ENCODE measurements at regions of chr2 and their contacts with region 1.

Region 1: DNA sequence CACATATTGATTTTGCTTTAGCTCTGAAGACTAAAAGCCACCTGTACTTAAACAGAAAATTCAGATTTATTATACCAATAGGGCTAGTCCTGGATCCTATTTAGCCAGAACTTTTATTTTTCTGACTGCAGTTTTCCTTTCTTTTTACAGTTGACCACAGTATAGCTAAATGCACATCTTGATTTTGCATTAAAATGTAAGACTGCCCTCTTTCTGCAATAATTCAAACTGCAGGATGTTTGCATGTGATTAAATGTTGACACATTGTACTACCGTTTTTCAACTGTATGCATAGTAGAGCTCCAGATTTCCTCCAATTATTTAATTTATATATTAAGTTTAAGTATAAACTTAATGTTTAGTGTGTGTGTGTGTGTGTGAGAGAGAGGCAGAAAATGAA is 1262.9 kb downstream of the SUCLG1 start:
- DNase-seq: peak; percentile 62
- H3K4me3 ChIP-seq: no peak overlapping the region
- H3K27ac ChIP-seq: peak overlapping the region; percentile 34
- H3K4me1 ChIP-seq: peaks cover 7% of the 10 kb centered on the region
- H3K27me3 ChIP-seq: no peaks in the 10 kb centered on the region
- CTCF ChIP-seq: peak; percentile 42 to 51
- POLR2A ChIP-seq: no peak

Region 2: DNA sequence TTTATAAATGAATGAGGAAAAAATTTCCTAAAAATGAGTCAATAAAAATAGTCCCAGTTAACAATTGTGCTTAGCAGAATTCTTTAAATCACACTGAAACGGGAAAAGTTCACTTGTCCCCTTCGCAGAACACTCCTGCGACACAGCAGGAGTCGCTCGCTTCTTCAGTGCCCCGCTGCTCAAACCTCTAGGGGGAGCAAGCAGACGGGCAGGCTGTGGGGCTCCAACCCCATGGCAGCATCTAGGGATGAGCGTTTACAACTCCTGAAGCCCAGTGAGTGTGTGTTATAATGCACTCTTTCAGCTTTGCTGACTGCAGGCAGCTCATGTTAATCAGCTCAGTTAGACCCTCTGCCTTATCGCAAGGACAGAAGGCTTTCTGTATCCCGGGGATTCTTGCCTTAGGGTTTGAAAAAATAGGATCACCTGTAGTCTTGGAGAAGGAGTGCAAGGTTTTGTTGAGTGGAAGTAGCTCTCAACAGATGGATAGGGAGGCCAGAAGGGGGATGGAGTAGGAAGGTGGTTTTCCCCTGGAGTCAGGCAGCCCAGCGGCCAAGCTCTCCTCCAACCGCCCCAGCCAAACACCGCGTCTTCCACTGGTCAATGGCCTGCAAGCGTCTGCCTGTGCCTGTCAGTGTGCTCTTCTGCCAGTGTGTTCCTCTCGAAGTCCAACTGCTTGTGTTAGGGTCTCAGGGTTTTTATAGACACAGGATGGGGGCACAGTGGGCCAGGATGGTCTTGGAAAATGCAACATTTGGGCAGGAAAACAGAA is 913.9 kb before region 1 on chr2:
- CTCF ChIA-PET with region 1: no interaction called
- POLR2A ChIA-PET with region 1: no interaction called
- dilution Hi-C with region 1: no loop called
- intact Hi-C with region 1: no loop called
- DNase-seq: no peak
- H3K4me3 ChIP-seq: no peak overlapping the region
- H3K27ac ChIP-seq: no peak overlapping the region
- H3K4me1 ChIP-seq: no peaks in the 10 kb centered on the region
- H3K27me3 ChIP-seq: no peaks in the 10 kb centered on the region
- CTCF ChIP-seq: no peak
- POLR2A ChIP-seq: no peak

Region 3: DNA sequence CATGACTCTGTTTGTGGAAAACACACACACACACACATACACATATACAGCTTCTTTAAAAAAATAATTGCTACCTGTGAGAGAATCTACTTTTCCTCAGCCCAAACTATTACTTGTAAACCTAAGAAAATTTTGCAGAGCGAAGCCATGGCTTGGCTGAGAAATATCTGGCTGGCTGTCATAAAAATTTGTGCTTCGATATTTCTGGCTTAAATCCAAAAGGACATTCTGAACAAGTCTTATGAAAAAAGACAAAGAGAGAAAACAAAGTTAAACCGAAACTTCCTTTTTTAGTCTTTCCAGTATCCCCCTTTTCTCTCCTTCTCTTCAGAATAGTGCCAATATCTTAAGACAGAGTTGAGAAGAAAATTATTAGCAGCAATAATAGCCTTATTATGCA is 785.2 kb before region 1 on chr2:
- CTCF ChIA-PET with region 1: interaction called, 3 read pairs
- POLR2A ChIA-PET with region 1: no interaction called
- dilution Hi-C with region 1: no loop called
- intact Hi-C with region 1: loop called (anchors 10 kb)
- DNase-seq: no peak
- H3K4me3 ChIP-seq: peak overlapping the region in 1 of 3 experiments; percentile 48
- H3K27ac ChIP-seq: no peak overlapping the region
- H3K4me1 ChIP-seq: peaks cover 5% of the 10 kb centered on the region
- H3K27me3 ChIP-seq: no peaks in the 10 kb centered on the region
- CTCF ChIP-seq: no peak
- POLR2A ChIP-seq: no peak

Region 4: DNA sequence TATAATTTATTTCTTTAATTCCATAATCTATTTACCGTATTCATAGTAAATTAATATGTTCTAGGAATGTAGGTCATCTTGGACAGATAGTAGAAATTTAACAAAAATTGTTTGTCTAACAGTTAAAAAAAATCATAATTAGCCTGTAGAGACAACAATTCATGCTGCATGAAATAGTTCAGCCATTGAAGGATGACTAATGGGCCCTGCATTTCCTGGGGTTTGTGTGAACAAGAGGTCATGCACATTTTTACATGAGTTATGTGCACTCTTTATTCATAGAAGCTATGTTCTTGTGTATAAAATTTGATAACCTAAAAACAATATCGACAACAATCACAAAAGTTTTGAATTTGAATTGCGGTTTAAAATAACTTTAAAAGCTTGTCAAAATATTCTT is 400.8 kb before region 1 on chr2:
- CTCF ChIA-PET with region 1: interaction called, 16 read pairs
- POLR2A ChIA-PET with region 1: no interaction called
- dilution Hi-C with region 1: no loop called
- intact Hi-C with region 1: loop called (anchors 1 kb)
- DNase-seq: peak; percentile 87
- H3K4me3 ChIP-seq: peak overlapping the region in 1 of 3 experiments; percentile 55
- H3K27ac ChIP-seq: peak overlapping the region; percentile 93
- H3K4me1 ChIP-seq: peaks cover 21% of the 10 kb centered on the region
- H3K27me3 ChIP-seq: no peaks in the 10 kb centered on the region
- CTCF ChIP-seq: no peak
- POLR2A ChIP-seq: peak; percentile 22

Region 5: GRCh38 chr2:83055338-83056010 is 140.8 kb before region 1 on chr2:
- CTCF ChIA-PET with region 1: interaction called, 3 read pairs
- POLR2A ChIA-PET with region 1: no interaction called
- dilution Hi-C with region 1: no loop called
- intact Hi-C with region 1: loop called (anchors 1 kb)
- DNase-seq: peak; percentile 93
- H3K4me3 ChIP-seq: peak overlapping the region in 1 of 3 experiments; percentile 15
- H3K27ac ChIP-seq: peak overlapping the region; percentile 97
- H3K4me1 ChIP-seq: peaks cover 36% of the 10 kb centered on the region
- H3K27me3 ChIP-seq: no peaks in the 10 kb centered on the region
- CTCF ChIP-seq: no peak
- POLR2A ChIP-seq: no peak

Region 6: DNA sequence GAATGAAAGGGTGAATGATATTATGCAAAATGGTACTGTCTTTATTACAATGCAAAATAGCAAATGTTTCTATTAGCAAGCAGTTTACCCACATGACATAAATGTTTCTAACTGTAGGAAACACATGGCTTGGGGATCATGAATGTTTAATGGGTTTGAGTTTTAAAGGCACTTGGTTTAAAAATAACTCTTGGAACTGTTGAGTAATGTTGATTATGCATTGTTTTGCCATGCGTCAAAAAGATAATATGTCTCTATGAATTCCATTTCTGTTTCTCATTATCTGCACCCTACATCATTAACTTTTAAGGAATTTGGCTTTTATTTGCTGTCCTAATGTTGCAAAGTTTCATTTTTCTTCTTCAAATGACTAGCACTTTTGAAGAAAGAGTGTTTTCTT is 92.6 kb before region 1 on chr2:
- CTCF ChIA-PET with region 1: interaction called, 5 read pairs
- POLR2A ChIA-PET with region 1: no interaction called
- dilution Hi-C with region 1: no loop called
- intact Hi-C with region 1: loop called (anchors 1 kb)
- DNase-seq: peak; percentile 91
- H3K4me3 ChIP-seq: no peak overlapping the region
- H3K27ac ChIP-seq: peak overlapping the region; percentile 86
- H3K4me1 ChIP-seq: peaks cover 24% of the 10 kb centered on the region
- H3K27me3 ChIP-seq: no peaks in the 10 kb centered on the region
- CTCF ChIP-seq: no peak
- POLR2A ChIP-seq: no peak

Region 7: GRCh38 chr2:84314901-84315330 is 1118.7 kb after region 1 on chr2:
- CTCF ChIA-PET with region 1: no interaction called
- POLR2A ChIA-PET with region 1: no interaction called
- dilution Hi-C with region 1: no loop called
- intact Hi-C with region 1: loop called (anchors 5 kb)
- DNase-seq: peak; percentile 69
- H3K4me3 ChIP-seq: no peak overlapping the region
- H3K27ac ChIP-seq: no peak overlapping the region
- H3K4me1 ChIP-seq: no peaks in the 10 kb centered on the region
- H3K27me3 ChIP-seq: no peaks in the 10 kb centered on the region
- CTCF ChIP-seq: peak; percentile 84 to 88
- POLR2A ChIP-seq: no peak

Measured in endothelial cell of umbilical vein (primary cell).